ENCODE measurements at regions of chr1 and their contacts with region 1.

Region 1: GRCh38 chr1:177106614-177107354 is 57.7 kb downstream of the ASTN1 start:
- DNase-seq: peak; percentile 25
- ATAC-seq: peak; percentile 74
- H3K4me3 ChIP-seq: no peak overlapping the region
- H3K27ac ChIP-seq: no peak overlapping the region
- H3K4me1 ChIP-seq: no peaks in the 10 kb centered on the region
- H3K27me3 ChIP-seq: no peaks in the 10 kb centered on the region
- CTCF ChIP-seq: no peak

Region 2: GRCh38 chr1:176932114-176933104 is 174.4 kb before region 1 on chr1:
- CTCF ChIA-PET with region 1: no interaction called
- POLR2A ChIA-PET with region 1: no interaction called
- intact Hi-C with region 1: no loop called
- DNase-seq: no peak
- ATAC-seq: no peak
- H3K4me3 ChIP-seq: no peak overlapping the region
- H3K27ac ChIP-seq: no peak overlapping the region
- H3K4me1 ChIP-seq: no peaks in the 10 kb centered on the region
- H3K27me3 ChIP-seq: no peaks in the 10 kb centered on the region
- CTCF ChIP-seq: no peak

Region 3: DNA sequence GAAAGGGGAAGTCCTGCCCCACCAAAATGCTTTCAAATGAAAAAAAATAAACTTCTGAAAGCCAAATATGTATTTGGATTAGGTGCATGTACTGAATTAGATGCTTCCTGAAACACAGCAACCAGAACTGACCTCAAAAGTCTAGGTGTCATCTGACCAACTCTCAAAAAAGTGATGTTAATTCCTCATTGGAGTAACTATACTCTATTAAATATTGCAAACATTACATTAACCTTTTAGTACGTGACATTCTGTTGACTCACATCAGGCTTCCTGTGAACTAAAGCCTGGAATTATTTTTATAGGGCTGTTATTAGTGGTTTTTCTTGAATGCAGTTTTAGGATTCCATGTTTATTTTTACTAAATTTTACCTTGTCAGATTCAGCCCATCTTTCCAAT is 15.7 kb before region 1 on chr1:
- CTCF ChIA-PET with region 1: no interaction called
- POLR2A ChIA-PET with region 1: no interaction called
- intact Hi-C with region 1: loop called (anchors 2 kb)
- DNase-seq: peak; percentile 88
- ATAC-seq: peak; percentile 94
- H3K4me3 ChIP-seq: no peak overlapping the region
- H3K27ac ChIP-seq: peak overlapping the region; percentile 84
- H3K4me1 ChIP-seq: peaks cover 29% of the 10 kb centered on the region
- H3K27me3 ChIP-seq: no peaks in the 10 kb centered on the region
- CTCF ChIP-seq: no peak

Region 4: DNA sequence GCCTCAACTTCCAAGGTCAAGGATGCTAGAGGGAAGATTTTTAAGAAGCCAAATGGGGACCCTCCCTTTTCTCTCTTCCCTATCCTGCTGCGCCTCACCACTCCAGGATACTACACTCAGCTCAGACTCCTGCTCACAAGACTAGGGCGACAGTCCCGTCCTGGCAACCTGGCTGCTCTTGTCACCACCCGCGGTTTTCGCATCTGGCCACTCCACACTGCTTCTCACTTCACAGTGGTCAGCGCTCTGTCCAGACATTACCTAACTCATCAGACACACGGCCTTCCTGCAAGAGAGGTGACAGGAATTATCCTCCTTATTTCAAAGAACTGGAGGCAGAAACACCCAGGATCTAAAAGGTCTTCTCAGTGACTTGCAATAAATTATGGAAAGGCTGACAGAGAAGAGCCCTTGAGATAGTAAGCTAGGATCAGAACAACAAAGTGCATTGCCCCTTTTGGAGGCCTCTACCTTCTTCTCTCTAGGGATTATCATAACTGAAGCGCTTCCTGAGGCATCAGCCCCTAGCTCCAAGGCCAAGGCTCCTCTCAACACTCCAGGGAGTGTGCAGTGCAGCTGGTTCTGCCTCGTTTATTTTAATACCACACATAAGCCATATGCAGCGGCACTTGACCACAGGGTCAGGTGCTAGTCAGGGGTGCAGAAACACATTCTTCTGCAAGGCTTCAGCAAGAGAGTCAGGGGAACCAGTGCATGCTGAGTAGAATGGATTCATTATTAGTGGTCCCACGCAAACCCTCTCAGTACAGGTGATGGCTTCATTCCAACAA is 15.9 kb after region 1 on chr1:
- CTCF ChIA-PET with region 1: no interaction called
- POLR2A ChIA-PET with region 1: no interaction called
- intact Hi-C with region 1: no loop called
- DNase-seq: no peak
- ATAC-seq: no peak
- H3K4me3 ChIP-seq: no peak overlapping the region
- H3K27ac ChIP-seq: no peak overlapping the region
- H3K4me1 ChIP-seq: no peaks in the 10 kb centered on the region
- H3K27me3 ChIP-seq: no peaks in the 10 kb centered on the region
- CTCF ChIP-seq: no peak

Measured in PC-3 (cell line).